ENCODE measurements at regions of chr4 and their contacts with region 1.

Region 1: DNA sequence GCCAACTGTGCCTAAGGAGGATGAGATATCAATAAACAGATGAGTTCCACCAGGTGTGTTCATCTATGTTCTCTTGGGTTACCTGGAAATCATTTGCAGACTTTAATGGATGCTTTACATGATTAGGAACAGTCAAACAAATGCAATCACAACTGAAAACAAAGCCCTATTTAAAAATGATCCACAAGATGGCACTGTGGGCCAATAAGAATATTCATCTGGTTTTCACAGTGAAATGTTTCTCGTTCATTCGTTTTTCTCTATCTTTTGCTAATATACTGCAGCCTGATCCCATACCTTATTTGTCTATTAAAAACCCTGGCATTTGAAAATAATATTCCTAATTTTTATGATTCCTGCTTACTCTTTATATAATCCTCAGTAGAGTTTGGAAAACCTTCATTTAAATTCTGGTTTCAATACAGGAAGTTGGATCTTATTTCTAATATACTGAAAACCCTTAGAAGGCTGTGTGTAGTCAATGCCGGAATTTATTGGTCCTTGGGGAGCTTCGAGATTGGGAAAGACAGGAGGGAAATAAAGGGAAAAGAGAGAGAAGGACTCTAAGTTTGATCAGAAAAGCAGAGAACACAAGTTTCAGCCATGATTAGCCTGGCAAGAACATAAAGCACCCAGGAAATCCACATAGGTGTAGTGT is 63.8 kb upstream of the TAPT1 start:
- DNase-seq: no peak
- H3K4me3 ChIP-seq: no peak overlapping the region
- H3K27ac ChIP-seq: no peak overlapping the region
- H3K4me1 ChIP-seq: no peaks in the 10 kb centered on the region
- H3K27me3 ChIP-seq: no peaks in the 10 kb centered on the region
- CTCF ChIP-seq: peak; percentile 9 to 63 (median 62)
- POLR2A ChIP-seq: no peak

Region 2: GRCh38 chr4:16157609-16158503 is 132.2 kb before region 1 on chr4:
- intact Hi-C with region 1: no loop called
- DNase-seq: no peak
- H3K4me3 ChIP-seq: no peak overlapping the region
- H3K27ac ChIP-seq: no peak overlapping the region
- H3K4me1 ChIP-seq: no peaks in the 10 kb centered on the region
- H3K27me3 ChIP-seq: no peaks in the 10 kb centered on the region
- CTCF ChIP-seq: no peak
- POLR2A ChIP-seq: no peak

Region 3: GRCh38 chr4:16253127-16253960 is 36.7 kb before region 1 on chr4:
- intact Hi-C with region 1: no loop called
- DNase-seq: no peak
- H3K4me3 ChIP-seq: no peak overlapping the region
- H3K27ac ChIP-seq: no peak overlapping the region
- H3K4me1 ChIP-seq: no peaks in the 10 kb centered on the region
- H3K27me3 ChIP-seq: no peaks in the 10 kb centered on the region
- CTCF ChIP-seq: no peak
- POLR2A ChIP-seq: no peak

Region 4: DNA sequence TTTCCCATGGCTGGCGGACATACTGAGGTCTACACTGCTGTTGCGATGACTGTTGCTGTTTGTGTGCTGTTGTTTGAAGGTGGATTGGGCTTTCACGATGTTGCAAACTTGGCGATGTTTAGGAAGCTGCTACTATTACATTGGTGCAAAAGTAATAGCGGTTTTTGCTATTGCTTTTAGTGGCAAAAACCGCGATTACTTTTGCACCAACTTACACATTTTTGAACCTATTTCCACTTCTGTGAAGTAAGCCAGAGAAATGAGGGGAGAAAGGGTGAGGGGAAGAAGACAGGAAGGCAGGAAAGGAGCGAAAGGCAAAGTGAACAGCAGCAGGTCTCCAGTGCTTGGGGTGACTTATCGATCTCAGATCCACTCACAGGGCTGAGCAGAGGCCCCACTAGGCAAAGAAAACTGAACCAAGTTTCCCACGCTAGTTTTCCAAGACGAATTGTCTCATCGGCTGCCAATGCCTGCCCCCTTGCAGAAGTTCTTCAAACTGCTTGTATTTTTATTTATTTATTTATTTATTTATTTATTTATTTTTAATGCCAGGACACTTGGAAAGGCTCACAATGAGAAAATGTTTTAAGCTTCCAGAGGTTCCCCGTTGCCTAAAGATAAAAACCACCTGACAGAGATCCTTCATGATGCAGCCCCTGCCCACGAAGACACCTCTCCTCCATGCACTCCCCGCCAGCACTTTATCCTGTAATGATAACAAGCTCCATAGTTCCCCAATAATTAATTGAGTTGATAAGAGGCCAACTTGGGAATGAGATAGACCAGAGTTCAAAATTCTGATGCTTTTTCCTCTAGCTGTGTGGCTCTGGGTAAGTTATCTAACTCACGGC is 1178.6 kb after region 1 on chr4:
- intact Hi-C with region 1: loop called (anchors 10 kb)
- DNase-seq: no peak
- H3K4me3 ChIP-seq: no peak overlapping the region
- H3K27ac ChIP-seq: no peak overlapping the region
- H3K4me1 ChIP-seq: no peaks in the 10 kb centered on the region
- H3K27me3 ChIP-seq: no peaks in the 10 kb centered on the region
- CTCF ChIP-seq: peak in 1 of 4 experiments; percentile 46
- POLR2A ChIP-seq: no peak